Spleen (tissue), 13 donors: ENCODE measurements at regions of chr10 and their contacts with region 1.

Region 1: GRCh38 chr10:4849555-4850242 is 23.7 kb downstream of the AKR1E2 start:
- DNase-seq: peak; percentile 93
- H3K4me3 ChIP-seq: no peak overlapping the region
- H3K27ac ChIP-seq: no peak overlapping the region
- H3K4me1 ChIP-seq: peaks cover 0 to 13% (median 7%) of the 10 kb centered on the region in 6 donors
- H3K27me3 ChIP-seq: no peaks in the 10 kb centered on the region
- CTCF ChIP-seq: peak; percentile 80 to 95 (median 91)
- POLR2A ChIP-seq: no peak

Region 2: GRCh38 chr10:5385224-5385623 is 535.5 kb after region 1 on chr10:
- intact Hi-C with region 1: loop called (anchors 10 kb)
- DNase-seq: no peak
- H3K4me3 ChIP-seq: no peak overlapping the region
- H3K27ac ChIP-seq: no peak overlapping the region
- H3K4me1 ChIP-seq: no peaks in the 10 kb centered on the region
- H3K27me3 ChIP-seq: no peaks in the 10 kb centered on the region
- CTCF ChIP-seq: no peak
- POLR2A ChIP-seq: no peak

Region 3: GRCh38 chr10:5434017-5434753 is 584.5 kb after region 1 on chr10:
- intact Hi-C with region 1: loop called (anchors 10 kb)
- DNase-seq: no peak
- H3K4me3 ChIP-seq: no peak overlapping the region
- H3K27ac ChIP-seq: no peak overlapping the region
- H3K4me1 ChIP-seq: peaks cover 0 to 6% (median 0%) of the 10 kb centered on the region in 6 donors
- H3K27me3 ChIP-seq: no peaks in the 10 kb centered on the region
- CTCF ChIP-seq: peak in 8 of 11 experiments; percentile 15 to 59 (median 43)
- POLR2A ChIP-seq: no peak